Naive thymus-derived CD4-positive, alpha-beta T cell (primary cell): ENCODE measurements at regions of chr1 and their contacts with region 1.

Region 1: GRCh38 chr1:211258756-211259637 is at the start of gene RCOR3:
- DNase-seq: peak; percentile 81 to 92 (median 88)
- ATAC-seq: peak; percentile 89
- H3K4me3 ChIP-seq: peak within 1 kb of the TSS; percentile 87
- H3K4me3 Mint-ChIP-seq: peak within 1 kb of the TSS; percentile 86 to 97 (median 92)
- H3K27ac ChIP-seq: peak within 1 kb of the TSS; percentile 89
- H3K27ac Mint-ChIP-seq: peak within 1 kb of the TSS; percentile 90 to 99 (median 93)
- H3K4me1 ChIP-seq: peaks cover 6 to 17% of the 10 kb centered on the region in 2 donors
- H3K4me1 Mint-ChIP-seq: peaks cover 17 to 33% (median 23%) of the 10 kb centered on the region in 7 donors
- H3K27me3 ChIP-seq: no peaks in the 10 kb centered on the region
- H3K27me3 Mint-ChIP-seq: no peaks in the 10 kb centered on the region
- total RNA-seq, gene RCOR3: 42.3 to 98.0 (median 82.8) TPM

Region 2: GRCh38 chr1:209755926-209756614 is 1502.9 kb before region 1 on chr1 and contains the start of gene TRAF3IP3:
- CTCF ChIA-PET with region 1: no interaction called
- POLR2A ChIA-PET with region 1: no interaction called
- intact Hi-C with region 1: loop called in 1 of 2 experiments (anchors 10 kb)
- DNase-seq: peak; percentile 33 to 86 (median 84)
- ATAC-seq: peak; percentile 97
- H3K4me3 ChIP-seq: peak within 1 kb of the TSS; percentile 91
- H3K4me3 Mint-ChIP-seq: peak within 1 kb of the TSS; percentile 89 to 100 (median 98)
- H3K27ac ChIP-seq: peak within 1 kb of the TSS; percentile 83
- H3K27ac Mint-ChIP-seq: peak within 1 kb of the TSS in 7 of 9 donors; percentile 90 to 99 (median 97)
- H3K4me1 ChIP-seq: peaks cover 63 to 64% of the 10 kb centered on the region in 2 donors
- H3K4me1 Mint-ChIP-seq: peaks cover 68 to 85% (median 78%) of the 10 kb centered on the region in 7 donors
- H3K27me3 ChIP-seq: no peaks in the 10 kb centered on the region
- H3K27me3 Mint-ChIP-seq: no peaks in the 10 kb centered on the region
- total RNA-seq, gene TRAF3IP3: 303 to 746 (median 450) TPM

Region 3: DNA sequence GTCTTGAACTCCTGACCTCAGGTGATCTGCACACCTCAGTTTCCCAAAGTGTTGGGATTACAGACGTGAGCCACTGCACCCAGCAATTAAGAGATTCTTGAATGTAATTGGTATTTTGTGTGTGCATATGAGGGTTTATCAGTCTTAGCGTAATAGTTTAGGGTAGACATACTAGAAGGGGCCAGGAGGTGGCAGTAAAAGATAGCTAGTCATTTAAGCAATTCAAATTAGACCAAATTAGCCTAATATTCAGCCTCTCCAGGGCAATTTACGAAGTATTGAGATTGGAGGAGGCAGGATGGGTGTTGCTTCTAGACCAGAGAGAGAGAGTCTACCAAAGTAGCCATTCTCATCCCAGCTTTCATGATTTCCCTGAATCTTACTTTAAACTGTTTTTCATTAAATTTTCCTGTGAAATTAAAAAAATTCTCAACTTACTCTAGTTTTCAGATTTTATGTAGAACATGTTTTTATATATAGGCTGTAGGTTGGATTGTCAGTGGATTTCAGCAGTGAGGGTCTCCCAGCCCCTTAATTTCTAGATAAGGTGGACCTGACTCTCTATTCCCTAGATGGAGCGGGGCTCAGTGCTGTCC is 810.6 kb before region 1 on chr1:
- CTCF ChIA-PET with region 1: interaction called, 6 read pairs
- POLR2A ChIA-PET with region 1: no interaction called
- intact Hi-C with region 1: loop called in 1 of 2 experiments (anchors 1 kb)
- DNase-seq: peak in 3 of 9 donors; percentile 6 to 16 (median 9)
- ATAC-seq: no peak
- H3K4me3 ChIP-seq: no peak overlapping the region
- H3K4me3 Mint-ChIP-seq: no peak overlapping the region
- H3K27ac ChIP-seq: no peak overlapping the region
- H3K27ac Mint-ChIP-seq: no peak overlapping the region
- H3K4me1 ChIP-seq: peaks cover 6 to 7% of the 10 kb centered on the region in 2 donors
- H3K4me1 Mint-ChIP-seq: peaks cover 6 to 15% (median 14%) of the 10 kb centered on the region in 7 donors
- H3K27me3 ChIP-seq: no peaks in the 10 kb centered on the region
- H3K27me3 Mint-ChIP-seq: peaks cover 0 to 13% (median 0%) of the 10 kb centered on the region in 5 donors

Region 4: GRCh38 chr1:211247921-211248320 is 11.1 kb before region 1 on chr1:
- CTCF ChIA-PET with region 1: no interaction called
- POLR2A ChIA-PET with region 1: interaction called, 10 read pairs
- intact Hi-C with region 1: no loop called
- DNase-seq: no peak
- ATAC-seq: no peak
- H3K4me3 ChIP-seq: no peak overlapping the region
- H3K4me3 Mint-ChIP-seq: peak overlapping the region in 1 of 10 donors; percentile 1
- H3K27ac ChIP-seq: no peak overlapping the region
- H3K27ac Mint-ChIP-seq: peak overlapping the region in 4 of 9 donors; percentile 34 to 64 (median 44)
- H3K4me1 ChIP-seq: no peaks in the 10 kb centered on the region
- H3K4me1 Mint-ChIP-seq: peaks cover 0 to 16% (median 9%) of the 10 kb centered on the region in 7 donors
- H3K27me3 ChIP-seq: no peaks in the 10 kb centered on the region
- H3K27me3 Mint-ChIP-seq: peaks cover 0 to 24% (median 0%) of the 10 kb centered on the region in 5 donors

Region 5: DNA sequence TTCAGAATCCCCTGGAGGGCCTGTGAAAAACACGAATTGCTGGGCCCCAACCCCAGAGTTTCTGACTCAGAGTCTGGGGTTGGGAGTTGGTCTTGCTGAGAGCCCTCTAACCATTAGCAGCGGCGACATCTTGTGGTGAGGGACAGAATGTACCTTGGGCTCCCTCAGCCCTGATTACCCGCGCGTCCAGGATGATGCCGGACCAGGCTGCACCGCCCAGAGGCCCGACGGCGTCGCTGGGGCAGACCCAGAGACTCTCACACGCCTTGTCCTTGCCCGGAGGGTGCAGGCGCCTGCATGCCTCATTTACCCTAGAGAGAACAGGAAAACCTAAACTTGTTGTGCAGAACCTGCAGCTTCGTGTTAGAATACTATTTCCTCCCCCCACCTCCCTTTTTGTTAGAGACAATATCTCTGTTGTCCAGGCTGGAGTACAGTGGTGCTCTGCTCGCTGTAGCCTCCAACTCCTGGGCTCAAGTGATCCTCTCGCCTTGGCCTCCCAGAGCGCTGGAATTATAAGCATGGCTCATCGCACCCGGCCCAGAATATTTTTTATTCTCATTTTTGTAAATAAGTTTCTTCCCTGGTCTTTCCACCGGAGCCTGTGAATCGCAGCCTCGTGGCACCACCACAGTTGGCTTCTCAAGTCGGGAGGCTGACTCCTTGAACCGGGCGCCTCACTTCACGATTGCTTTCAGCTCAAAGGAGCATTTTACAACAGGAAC is 255.2 kb after region 1 on chr1:
- CTCF ChIA-PET with region 1: interaction called, 3 read pairs
- POLR2A ChIA-PET with region 1: interaction called, 3 read pairs
- intact Hi-C with region 1: loop called in 1 of 2 experiments (anchors 1 kb)
- DNase-seq: peak; percentile 16 to 71 (median 46)
- ATAC-seq: peak; percentile 80
- H3K4me3 ChIP-seq: no peak overlapping the region
- H3K4me3 Mint-ChIP-seq: peak overlapping the region; percentile 61 to 84 (median 73)
- H3K27ac ChIP-seq: no peak overlapping the region
- H3K27ac Mint-ChIP-seq: peak overlapping the region in 2 of 9 donors; percentile 46 to 63
- H3K4me1 ChIP-seq: peaks cover 10 to 11% of the 10 kb centered on the region in 2 donors
- H3K4me1 Mint-ChIP-seq: peaks cover 5 to 35% (median 20%) of the 10 kb centered on the region in 7 donors
- H3K27me3 ChIP-seq: no peaks in the 10 kb centered on the region
- H3K27me3 Mint-ChIP-seq: peaks cover 0 to 12% (median 5%) of the 10 kb centered on the region in 5 donors

Region 6: GRCh38 chr1:212035123-212035834 is 776.3 kb after region 1 on chr1 and contains the starts of genes DTL and INTS7:
- CTCF ChIA-PET with region 1: no interaction called
- POLR2A ChIA-PET with region 1: no interaction called
- intact Hi-C with region 1: loop called in 1 of 2 experiments (anchors 1 kb)
- DNase-seq: peak; percentile 94 to 99 (median 99)
- ATAC-seq: peak; percentile 93
- H3K4me3 ChIP-seq: peak within 1 kb of the TSS; percentile 99
- H3K4me3 Mint-ChIP-seq: peak within 1 kb of the TSS; percentile 86 to 100 (median 98)
- H3K27ac ChIP-seq: peak within 1 kb of the TSS; percentile 70
- H3K27ac Mint-ChIP-seq: peak within 1 kb of the TSS; percentile 95 to 99 (median 98)
- H3K4me1 ChIP-seq: peaks cover 20 to 23% of the 10 kb centered on the region in 2 donors
- H3K4me1 Mint-ChIP-seq: peaks cover 18 to 68% (median 54%) of the 10 kb centered on the region in 7 donors
- H3K27me3 ChIP-seq: no peaks in the 10 kb centered on the region
- H3K27me3 Mint-ChIP-seq: peaks cover 0 to 5% (median 0%) of the 10 kb centered on the region in 5 donors
- total RNA-seq, gene DTL: 0.27 to 63.0 (median 0.78) TPM
- total RNA-seq, gene INTS7: 7.3 to 33.5 (median 8.6) TPM